ENCODE measurements at regions of chr6 and their contacts with region 1.

Region 1: DNA sequence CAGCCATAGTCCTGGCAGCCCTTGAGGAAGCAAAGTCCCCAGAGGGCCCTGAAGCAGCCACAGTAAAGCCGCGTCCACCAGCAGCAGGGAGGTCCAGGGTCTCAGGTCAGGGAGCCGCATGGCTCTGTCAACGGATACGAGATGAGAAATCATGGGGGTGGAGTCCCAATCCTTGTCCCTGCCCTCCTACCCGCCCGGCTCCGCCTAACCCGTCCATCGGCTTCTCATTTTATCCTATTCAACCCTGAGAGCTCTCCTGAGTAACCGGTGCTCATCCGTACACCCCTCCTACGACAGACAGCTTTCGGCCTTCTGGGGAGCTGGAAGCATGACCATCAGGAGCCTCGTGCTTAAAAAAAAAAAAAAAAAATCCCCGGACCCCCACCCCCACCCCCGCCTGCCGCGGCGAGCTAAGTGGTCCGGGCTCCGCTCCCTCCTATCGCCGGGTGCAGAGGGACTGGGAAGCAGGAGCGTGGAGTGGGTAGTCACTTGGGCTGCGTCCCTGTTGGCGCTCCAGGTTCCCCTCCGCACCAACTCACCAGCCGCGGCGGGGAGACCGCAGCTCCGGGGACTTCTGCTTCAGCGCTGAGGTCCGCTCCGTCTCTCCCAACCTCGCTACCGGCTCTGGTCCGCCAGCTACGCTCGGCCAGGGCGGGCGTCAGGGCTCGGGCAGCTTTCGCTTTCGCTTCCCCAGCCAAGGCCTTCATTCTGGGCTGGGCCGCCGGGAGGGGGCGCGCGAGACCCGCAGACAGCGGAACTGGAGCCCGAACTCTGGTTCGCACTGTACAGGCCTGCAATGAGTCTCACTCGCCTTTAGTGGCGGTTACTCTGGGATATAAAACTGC is at the start of gene TAP2:
- DNase-seq: peak; percentile 95
- H3K4me3 ChIP-seq: peak within 1 kb of the TSS; percentile 87 to 90
- H3K27ac ChIP-seq: peak within 1 kb of the TSS; percentile 87 to 88
- H3K4me1 ChIP-seq: peaks cover 0 to 8% of the 10 kb centered on the region in 2 experiments; a peak in 1 of 4 replicates
- H3K27me3 ChIP-seq: no peaks in the 10 kb centered on the region
- CTCF ChIP-seq: peak; percentile 96
- EP300 ChIP-seq: peak in 1 of 2 experiments; percentile 38; a peak in 1 of 4 replicates
- RAD21 ChIP-seq: peak; percentile 85
- polyA plus RNA-seq, gene TAP2: 14.0 and 19.9 TPM in 2 replicates

Region 2: GRCh38 chr6:32622545-32623401 is 215.6 kb before region 1 on chr6:
- CTCF ChIA-PET with region 1: no interaction called
- POLR2A ChIA-PET with region 1: no interaction called
- DNase-seq: peak; percentile 2
- H3K4me3 ChIP-seq: no peak overlapping the region
- H3K27ac ChIP-seq: no peak overlapping the region
- H3K4me1 ChIP-seq: no peaks in the 10 kb centered on the region
- H3K27me3 ChIP-seq: no peaks in the 10 kb centered on the region
- CTCF ChIP-seq: 0 out of 2 replicates have a peak, but pooled peaks have one; percentile 14
- EP300 ChIP-seq: no peak
- RAD21 ChIP-seq: no peak

Region 3: DNA sequence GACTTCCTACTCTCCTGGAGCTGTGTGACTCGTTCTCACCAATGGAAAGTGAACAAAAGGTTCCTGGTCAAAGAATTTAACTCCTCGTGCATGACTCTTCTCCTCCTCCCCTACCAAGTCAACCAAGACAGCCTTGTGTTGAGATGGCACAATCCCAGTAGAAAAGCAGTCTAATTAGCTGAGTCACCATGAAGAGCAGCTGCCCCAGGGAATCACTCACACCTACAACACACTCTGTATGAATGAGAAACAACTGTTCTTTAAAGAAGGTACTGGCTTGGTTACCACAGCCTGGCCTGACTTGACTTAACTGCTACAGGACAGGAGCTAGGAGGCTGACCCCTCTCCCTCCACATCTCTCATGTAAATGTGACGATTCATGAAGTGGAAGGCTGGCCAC is 18.6 kb before region 1 on chr6:
- CTCF ChIA-PET with region 1: interaction called, 15 read pairs
- POLR2A ChIA-PET with region 1: no interaction called
- DNase-seq: no peak
- H3K4me3 ChIP-seq: no peak overlapping the region
- H3K27ac ChIP-seq: no peak overlapping the region
- H3K4me1 ChIP-seq: no peaks in the 10 kb centered on the region
- H3K27me3 ChIP-seq: peaks cover 13% of the 10 kb centered on the region; the same call in 1 of the 2 replicates
- CTCF ChIP-seq: no peak
- EP300 ChIP-seq: no peak
- RAD21 ChIP-seq: no peak

Region 4: GRCh38 chr6:32853541-32854375 is 15.4 kb after region 1 on chr6 and contains the starts of genes PSMB9 and TAP1:
- CTCF ChIA-PET with region 1: interaction called, 128 read pairs
- POLR2A ChIA-PET with region 1: interaction called, 4 read pairs
- DNase-seq: peak; percentile 87
- H3K4me3 ChIP-seq: peak within 1 kb of the TSS; percentile 88 to 89
- H3K27ac ChIP-seq: peak within 1 kb of the TSS; percentile 83 to 90
- H3K4me1 ChIP-seq: peaks cover 0 to 14% of the 10 kb centered on the region in 2 experiments; a peak in 1 of 4 replicates
- H3K27me3 ChIP-seq: no peaks in the 10 kb centered on the region
- CTCF ChIP-seq: peak; percentile 64
- EP300 ChIP-seq: no peak
- RAD21 ChIP-seq: peak; percentile 46
- polyA plus RNA-seq, gene PSMB9: 52.4 and 83.7 TPM in 2 replicates
- polyA plus RNA-seq, gene TAP1: 31.1 and 35.7 TPM in 2 replicates

Region 5: DNA sequence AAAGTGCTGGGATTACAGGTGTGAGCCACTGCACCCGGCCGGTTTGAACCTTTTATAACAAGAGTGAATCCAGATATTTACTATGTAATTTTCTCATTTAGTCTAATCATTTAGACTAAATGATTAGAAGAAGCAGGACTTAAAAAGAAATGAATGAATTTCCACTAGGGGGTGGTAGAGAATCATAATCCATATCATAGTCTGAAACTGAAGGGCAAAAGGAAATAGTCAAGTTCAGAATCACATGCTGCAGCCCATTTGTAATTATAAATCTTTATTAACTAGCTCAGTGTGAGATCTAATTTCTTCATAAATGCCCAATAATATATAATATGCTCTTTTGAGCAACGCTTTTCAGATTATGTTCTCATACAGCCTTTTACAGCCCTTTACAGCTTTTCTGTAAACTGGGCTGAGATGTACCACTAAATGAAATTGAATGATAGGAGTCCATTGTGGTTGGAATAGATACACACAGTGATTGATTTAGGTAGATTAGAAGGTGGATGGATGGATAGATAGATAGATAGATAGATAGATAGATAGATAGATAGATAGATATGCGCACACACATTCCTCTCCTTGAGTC is 47.5 kb after region 1 on chr6:
- CTCF ChIA-PET with region 1: interaction called, 13 read pairs
- POLR2A ChIA-PET with region 1: no interaction called
- DNase-seq: peak; percentile 50
- H3K4me3 ChIP-seq: no peak overlapping the region; a peak in 1 of 4 replicates
- H3K27ac ChIP-seq: no peak overlapping the region
- H3K4me1 ChIP-seq: peaks cover 0 to 8% of the 10 kb centered on the region in 2 experiments; a peak in 1 of 4 replicates
- H3K27me3 ChIP-seq: peaks cover 14% of the 10 kb centered on the region; the same call in 1 of the 2 replicates
- CTCF ChIP-seq: peak; percentile 78
- EP300 ChIP-seq: no peak
- RAD21 ChIP-seq: peak; percentile 85

Region 6: DNA sequence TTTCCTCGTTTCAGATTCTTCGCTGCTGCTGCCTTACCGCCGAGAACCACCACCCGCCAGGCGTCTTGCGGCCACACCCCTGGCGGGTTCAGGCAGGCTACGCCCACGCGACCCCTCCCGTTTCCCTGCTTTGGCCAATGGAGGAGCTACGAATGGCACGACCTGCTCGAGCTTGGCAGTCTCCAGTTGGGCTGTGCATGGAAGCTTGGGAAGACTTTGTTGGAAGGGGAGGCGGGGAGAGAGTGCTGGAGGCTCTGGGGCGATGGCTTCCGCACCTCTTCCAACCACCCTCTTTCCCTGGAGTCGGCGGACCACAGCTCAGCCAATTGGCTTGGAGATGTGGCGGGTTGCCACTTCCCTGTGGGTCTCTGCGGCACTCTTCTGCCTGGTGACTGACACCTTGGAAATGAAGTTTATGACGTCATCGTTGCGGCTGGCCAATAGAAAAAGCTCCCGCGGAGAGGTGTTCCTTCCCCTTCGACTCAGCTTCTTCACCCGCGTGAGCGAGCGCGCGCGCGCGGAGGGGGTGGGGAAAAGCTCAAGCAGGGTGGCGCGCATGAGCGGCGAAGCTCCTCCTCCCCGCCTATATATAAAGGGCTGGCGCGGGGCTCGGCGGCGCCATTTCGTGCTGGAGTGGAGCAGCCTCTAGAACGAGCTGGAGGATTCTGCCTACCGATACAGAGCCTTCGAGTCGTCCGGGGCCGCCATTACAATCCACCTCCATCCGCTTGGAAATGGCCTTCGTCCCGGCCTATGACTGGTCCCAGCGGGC is 133.4 kb after region 1 on chr6:
- CTCF ChIA-PET with region 1: interaction called, 9 read pairs
- POLR2A ChIA-PET with region 1: interaction called, 15 read pairs
- DNase-seq: peak; percentile 92
- H3K4me3 ChIP-seq: peak overlapping the region; percentile 83 to 88
- H3K27ac ChIP-seq: peak overlapping the region; percentile 97 to 99
- H3K4me1 ChIP-seq: peaks cover 21 to 28% of the 10 kb centered on the region in 2 experiments; a peak in 3 of 4 replicates
- H3K27me3 ChIP-seq: no peaks in the 10 kb centered on the region
- CTCF ChIP-seq: no peak
- EP300 ChIP-seq: peak; percentile 7 to 55; a peak in 2 of 4 replicates
- RAD21 ChIP-seq: no peak

Region 7: GRCh38 chr6:33391278-33391921 is 553.1 kb after region 1 on chr6 and contains the start of gene KIFC1:
- CTCF ChIA-PET with region 1: no interaction called
- POLR2A ChIA-PET with region 1: no interaction called
- DNase-seq: peak; percentile 93
- H3K4me3 ChIP-seq: peak within 1 kb of the TSS; percentile 66 to 92
- H3K27ac ChIP-seq: peak within 1 kb of the TSS; percentile 84 to 87
- H3K4me1 ChIP-seq: peaks cover 0 to 16% of the 10 kb centered on the region in 2 experiments; a peak in 3 of 4 replicates
- H3K27me3 ChIP-seq: no peaks in the 10 kb centered on the region
- CTCF ChIP-seq: peak; percentile 87
- EP300 ChIP-seq: no peak; a peak in 1 of 4 replicates
- RAD21 ChIP-seq: peak; percentile 67
- polyA plus RNA-seq, gene KIFC1: 29.6 and 35.9 TPM in 2 replicates

Measured in SK-N-SH (cell line).